Activated T-helper 1 cell treated with anti-CD3 and anti-CD28 coated beads, Interleukin-12 subunit alpha, Interleukin-12 subunit beta, Interleukin-2, Interleukin-4 antibody, amounts not matched to agents 30 ng/mL and 10 ng/mL and 1 ng/mL, durations not matched to agents 14 hours and 24 hours and 36 hours (primary cell): ENCODE measurements at regions of chr5 and their contacts with region 1.

Region 1: GRCh38 chr5:40361378-40361777 is 318.3 kb upstream of the PTGER4 start:
- DNase-seq: no peak
- H3K4me3 Mint-ChIP-seq: no peak overlapping the region
- H3K27ac Mint-ChIP-seq: no peak overlapping the region
- H3K4me1 Mint-ChIP-seq: peaks cover 18% of the 10 kb centered on the region
- H3K27me3 Mint-ChIP-seq: no peaks in the 10 kb centered on the region

Region 2: DNA sequence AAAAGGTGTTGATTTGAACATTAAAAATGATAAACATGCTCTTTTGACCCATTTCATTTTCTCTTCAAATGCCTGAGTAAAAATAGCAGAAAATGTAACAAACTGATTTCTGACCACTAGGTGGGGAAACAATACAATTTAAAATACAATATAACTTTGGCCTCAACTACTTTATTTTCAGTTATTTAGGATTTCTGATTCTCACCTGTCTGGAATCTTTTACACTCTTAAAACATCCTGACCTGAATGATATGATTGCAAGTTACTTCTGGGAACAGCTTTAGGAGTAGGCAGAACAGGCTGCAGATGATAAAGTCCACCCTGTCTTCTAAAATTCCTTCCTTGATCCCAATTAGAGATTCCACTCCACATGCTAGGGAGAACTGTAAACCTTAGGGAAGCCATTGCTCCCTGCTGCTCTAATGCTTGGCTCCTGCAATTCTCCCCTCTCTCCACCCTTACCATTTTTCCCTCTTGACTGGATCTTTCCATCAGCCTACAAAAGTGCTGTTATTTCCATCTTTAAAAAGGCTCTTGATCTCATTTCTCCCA is 1212.3 kb before region 1 on chr5:
- intact Hi-C with region 1: no loop called
- DNase-seq: no peak
- H3K4me3 Mint-ChIP-seq: no peak overlapping the region
- H3K27ac Mint-ChIP-seq: peak overlapping the region; percentile 76
- H3K4me1 Mint-ChIP-seq: peaks cover 52% of the 10 kb centered on the region
- H3K27me3 Mint-ChIP-seq: no peaks in the 10 kb centered on the region

Region 3: GRCh38 chr5:40347981-40348725 is 13.2 kb before region 1 on chr5:
- intact Hi-C with region 1: loop called (anchors 2 kb)
- DNase-seq: no peak
- H3K4me3 Mint-ChIP-seq: no peak overlapping the region
- H3K27ac Mint-ChIP-seq: peak overlapping the region; percentile 6
- H3K4me1 Mint-ChIP-seq: no peaks in the 10 kb centered on the region
- H3K27me3 Mint-ChIP-seq: no peaks in the 10 kb centered on the region